GM18951 (cell line): ENCODE measurements at regions of chr14 and their contacts with region 1.

Region 1: GRCh38 chr14:65164068-65164824 is 61.9 kb upstream of the MAX start:
- POLR2A ChIP-seq: no peak

Region 2: GRCh38 chr14:65277027-65277426 is 112.8 kb after region 1 on chr14:
- in situ Hi-C with region 1: no loop called
- POLR2A ChIP-seq: no peak

Region 3: GRCh38 chr14:65403231-65403630 is 239.0 kb after region 1 on chr14:
- in situ Hi-C with region 1: loop called (anchors 10 kb)
- POLR2A ChIP-seq: no peak

Region 4: DNA sequence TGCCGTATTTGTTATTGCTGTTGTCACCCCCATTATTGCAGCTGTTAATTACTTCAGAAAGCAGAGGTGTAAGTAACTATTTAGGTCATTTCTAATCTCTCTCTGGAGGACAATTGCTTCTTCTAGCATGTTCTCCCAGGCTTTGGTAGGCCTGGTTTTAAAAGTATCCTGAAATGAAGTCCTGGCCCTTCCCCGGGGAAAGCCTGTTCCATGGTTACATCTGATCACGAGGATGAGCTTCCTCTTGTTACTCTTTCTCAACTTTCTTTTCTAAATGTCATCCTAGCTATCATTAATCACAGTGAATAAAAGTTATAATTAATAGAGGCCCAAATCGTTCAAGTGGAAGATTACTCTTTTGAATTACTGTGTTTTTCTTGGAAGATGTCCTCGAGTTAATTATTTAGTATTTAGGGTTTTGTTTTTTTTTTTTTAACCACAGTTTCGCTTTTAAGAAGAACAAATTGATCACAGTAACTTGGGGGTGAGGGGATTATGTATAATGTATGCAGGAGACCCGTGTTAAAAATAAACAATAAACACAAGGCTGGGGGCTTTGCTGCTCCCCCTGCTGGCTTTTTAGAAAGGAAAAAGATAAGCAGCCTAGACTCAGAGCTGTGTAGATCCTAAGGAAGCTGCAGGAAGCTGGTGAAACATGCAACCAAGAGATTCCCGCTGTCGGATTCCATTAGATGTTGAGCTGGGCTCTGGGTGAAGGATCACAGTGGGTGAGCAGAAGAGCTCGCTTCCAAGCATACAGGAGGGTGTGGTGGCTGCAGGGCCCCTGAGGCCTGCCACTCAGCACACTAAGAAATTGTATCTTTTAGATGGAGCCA is 668.4 kb after region 1 on chr14:
- in situ Hi-C with region 1: loop called (anchors 25 kb)
- POLR2A ChIP-seq: no peak

Region 5: DNA sequence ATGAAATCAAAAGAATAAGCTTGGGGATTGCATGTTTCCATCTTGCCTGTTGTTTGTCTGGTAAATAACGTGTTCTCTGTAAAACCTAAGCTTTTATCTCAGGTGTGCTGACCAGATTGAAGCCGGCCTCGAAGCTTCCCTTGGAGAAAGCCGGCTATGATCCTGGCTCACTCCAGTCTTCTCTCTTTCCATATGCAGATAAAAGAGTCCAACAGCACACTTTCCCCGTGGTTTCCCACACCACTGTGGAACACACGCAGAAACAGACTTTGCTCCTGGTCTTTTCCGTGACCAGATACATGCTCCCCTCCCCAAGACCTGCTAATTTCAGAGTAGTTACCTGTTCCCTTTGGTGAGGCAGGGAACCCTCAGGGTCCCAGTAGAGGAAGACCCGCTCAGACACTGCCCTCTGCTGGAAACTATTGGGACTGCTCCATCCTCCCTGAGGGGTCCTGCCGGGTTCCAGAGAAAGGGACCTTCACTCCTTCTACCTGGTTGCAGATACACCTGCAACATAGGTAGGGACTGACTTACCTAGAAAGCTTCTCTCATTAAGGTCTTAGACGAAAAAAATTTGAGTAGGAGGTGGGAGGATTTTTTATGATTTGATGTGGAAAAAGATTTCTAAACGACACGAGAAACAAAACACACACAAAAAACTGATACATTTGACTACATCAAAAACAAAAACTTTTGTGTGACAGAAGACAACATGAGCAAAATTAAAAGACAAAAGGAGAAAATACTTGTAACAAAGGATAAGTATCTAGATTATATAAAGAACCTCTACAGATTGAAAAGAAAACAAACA is 906.5 kb after region 1 on chr14:
- in situ Hi-C with region 1: loop called (anchors 10 kb)
- POLR2A ChIP-seq: no peak